ENCODE measurements at regions of chr13 and their contacts with region 1.

Region 1: DNA sequence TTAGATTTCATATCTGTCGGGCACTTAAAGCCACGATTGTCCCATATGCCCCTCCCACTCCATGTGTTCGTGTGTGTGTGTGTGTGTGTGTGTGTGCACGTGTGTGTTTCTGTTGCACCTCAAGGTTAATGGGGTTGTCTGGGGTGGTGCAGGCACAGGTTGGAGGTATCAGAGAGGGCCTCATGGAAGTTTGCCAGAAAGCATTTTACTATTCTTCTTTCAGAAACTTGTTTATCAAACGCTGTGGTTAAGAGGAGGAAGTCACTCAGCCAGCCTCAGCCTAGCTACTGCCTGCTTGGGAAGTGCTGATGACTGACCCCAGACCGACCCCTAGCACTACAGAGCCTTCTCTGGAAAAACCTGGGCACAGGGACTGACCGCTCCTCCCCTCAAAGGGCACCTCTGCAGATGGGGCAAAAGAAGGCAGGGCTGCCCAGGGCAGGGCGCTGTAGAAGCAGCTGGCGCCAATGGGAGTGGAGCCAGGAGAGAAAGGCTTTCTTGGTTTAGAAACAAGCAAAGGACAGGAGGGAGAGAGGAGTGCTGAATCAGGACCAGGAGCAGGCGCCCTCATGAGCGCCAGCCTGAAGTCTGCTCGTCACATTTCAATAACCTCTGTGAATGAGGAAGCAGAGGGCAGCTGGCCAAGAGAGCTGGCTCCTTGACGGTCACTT is 3.9 kb downstream of the SIAH3 start:
- DNase-seq: peak; percentile 79 to 92 (median 92)
- H3K4me3 ChIP-seq: peak overlapping the region in 4 of 7 experiments; percentile 24 to 55 (median 32)
- H3K27ac ChIP-seq: peak overlapping the region in 1 of 2 experiments; percentile 27
- H3K4me1 ChIP-seq: peaks cover 13 to 50% (median 33%) of the 10 kb centered on the region in 4 experiments
- H3K27me3 ChIP-seq: peaks cover 0 to 21% (median 0%) of the 10 kb centered on the region in 5 experiments

Region 2: DNA sequence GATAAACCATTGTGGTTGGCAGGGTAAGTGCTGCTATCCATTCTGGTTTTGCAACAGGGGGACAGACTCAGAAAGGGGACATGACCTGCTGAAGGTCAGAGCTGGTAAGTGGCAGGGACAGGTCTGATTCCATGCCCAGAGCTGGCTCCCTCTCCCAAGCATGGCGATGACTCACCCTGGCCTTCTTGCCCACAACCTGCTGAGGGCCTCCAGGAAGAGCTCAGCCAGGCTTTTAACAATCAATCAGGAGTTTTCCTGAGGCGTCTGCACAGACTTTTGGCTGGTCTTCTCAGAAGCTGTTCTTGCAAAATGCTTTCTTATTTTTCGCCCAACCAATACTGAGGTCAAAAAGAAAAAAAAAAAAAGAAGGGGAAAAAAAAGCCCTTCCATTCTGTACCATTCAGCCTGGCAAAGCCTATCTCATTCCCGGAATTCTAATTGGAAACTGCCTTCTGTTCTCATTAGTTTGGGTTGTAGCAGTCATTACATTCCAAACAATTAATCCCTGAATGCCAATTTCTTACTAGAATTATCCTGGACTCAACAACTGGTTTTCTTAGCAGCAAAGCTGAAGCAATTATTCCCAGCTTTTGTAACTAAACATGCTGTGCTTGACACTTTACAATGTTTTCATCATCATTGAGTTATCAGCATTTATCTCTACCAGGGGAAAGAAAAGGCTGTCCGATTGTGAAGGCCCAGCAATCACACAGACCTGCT is 13.9 kb before region 1 on chr13:
- CTCF ChIA-PET with region 1: interaction called, 31 read pairs
- POLR2A ChIA-PET with region 1: no interaction called
- DNase-seq: peak in 2 of 3 donors; percentile 36 to 49
- H3K4me3 ChIP-seq: no peak overlapping the region
- H3K27ac ChIP-seq: no peak overlapping the region
- H3K4me1 ChIP-seq: peaks cover 0 to 19% (median 8%) of the 10 kb centered on the region in 4 experiments
- H3K27me3 ChIP-seq: no peaks in the 10 kb centered on the region